ENCODE measurements at regions of chr20 and their contacts with region 1.

Region 1: GRCh38 chr20:1118336-1119127 is at the start of gene PSMF1:
- DNase-seq: peak; percentile 91 to 98 (median 96)
- ATAC-seq: peak; percentile 89
- H3K4me3 ChIP-seq: peak within 1 kb of the TSS; percentile 81
- H3K4me3 Mint-ChIP-seq: peak within 1 kb of the TSS; percentile 96
- H3K27ac ChIP-seq: peak within 1 kb of the TSS; percentile 72 to 74
- H3K27ac Mint-ChIP-seq: peak within 1 kb of the TSS; percentile 96
- H3K4me1 ChIP-seq: peaks cover 55% of the 10 kb centered on the region
- H3K4me1 Mint-ChIP-seq: peaks cover 67% of the 10 kb centered on the region
- H3K27me3 ChIP-seq: no peaks in the 10 kb centered on the region
- H3K27me3 Mint-ChIP-seq: no peaks in the 10 kb centered on the region
- CTCF ChIP-seq: no peak
- total RNA-seq, gene PSMF1: 79.9 to 84.2 TPM

Region 2: GRCh38 chr20:462199-462991 is 656.1 kb before region 1 on chr20 and contains the start of gene TBC1D20:
- CTCF ChIA-PET with region 1: no interaction called
- POLR2A ChIA-PET with region 1: no interaction called
- intact Hi-C with region 1: loop called in 1 of 2 experiments (anchors 5 kb)
- DNase-seq: peak; percentile 72 to 95 (median 85)
- ATAC-seq: peak; percentile 97
- H3K4me3 ChIP-seq: peak within 1 kb of the TSS; percentile 90
- H3K4me3 Mint-ChIP-seq: peak within 1 kb of the TSS; percentile 98
- H3K27ac ChIP-seq: peak within 1 kb of the TSS; percentile 59 to 67
- H3K27ac Mint-ChIP-seq: peak within 1 kb of the TSS; percentile 90
- H3K4me1 ChIP-seq: peaks cover 34% of the 10 kb centered on the region
- H3K4me1 Mint-ChIP-seq: peaks cover 53% of the 10 kb centered on the region
- H3K27me3 ChIP-seq: no peaks in the 10 kb centered on the region
- H3K27me3 Mint-ChIP-seq: no peaks in the 10 kb centered on the region
- CTCF ChIP-seq: peak; percentile 20
- total RNA-seq, gene TBC1D20: 15.7 to 16.1 TPM

Region 3: GRCh38 chr20:833450-834150 is 284.9 kb before region 1 on chr20 and contains the start of gene FAM110A:
- CTCF ChIA-PET with region 1: no interaction called
- POLR2A ChIA-PET with region 1: no interaction called
- intact Hi-C with region 1: loop called (anchors 5 kb)
- DNase-seq: peak; percentile 91 to 98 (median 94)
- ATAC-seq: peak; percentile 93
- H3K4me3 ChIP-seq: peak within 1 kb of the TSS; percentile 74
- H3K4me3 Mint-ChIP-seq: peak within 1 kb of the TSS; percentile 92
- H3K27ac ChIP-seq: peak within 1 kb of the TSS; percentile 83 to 93
- H3K27ac Mint-ChIP-seq: peak within 1 kb of the TSS; percentile 87
- H3K4me1 ChIP-seq: peaks cover 40% of the 10 kb centered on the region
- H3K4me1 Mint-ChIP-seq: peaks cover 50% of the 10 kb centered on the region
- H3K27me3 ChIP-seq: no peaks in the 10 kb centered on the region
- H3K27me3 Mint-ChIP-seq: no peaks in the 10 kb centered on the region
- CTCF ChIP-seq: no peak
- total RNA-seq, gene FAM110A: 4.5 to 4.8 TPM

Region 4: GRCh38 chr20:1041845-1042390 is 76.6 kb before region 1 on chr20:
- CTCF ChIA-PET with region 1: no interaction called
- POLR2A ChIA-PET with region 1: no interaction called
- intact Hi-C with region 1: no loop called
- DNase-seq: no peak
- ATAC-seq: no peak
- H3K4me3 ChIP-seq: no peak overlapping the region
- H3K4me3 Mint-ChIP-seq: no peak overlapping the region
- H3K27ac ChIP-seq: no peak overlapping the region
- H3K27ac Mint-ChIP-seq: no peak overlapping the region
- H3K4me1 ChIP-seq: no peaks in the 10 kb centered on the region
- H3K4me1 Mint-ChIP-seq: no peaks in the 10 kb centered on the region
- H3K27me3 ChIP-seq: no peaks in the 10 kb centered on the region
- H3K27me3 Mint-ChIP-seq: peaks cover 9% of the 10 kb centered on the region
- CTCF ChIP-seq: no peak

Region 5: GRCh38 chr20:1266167-1266973 is 147.8 kb after region 1 on chr20 and contains the start of gene SNPH:
- CTCF ChIA-PET with region 1: no interaction called
- POLR2A ChIA-PET with region 1: no interaction called
- intact Hi-C with region 1: loop called in 1 of 2 experiments (anchors 5 kb)
- DNase-seq: peak; percentile 61 to 90 (median 72)
- ATAC-seq: peak; percentile 80
- H3K4me3 ChIP-seq: peak within 1 kb of the TSS; percentile 60
- H3K4me3 Mint-ChIP-seq: peak within 1 kb of the TSS; percentile 90
- H3K27ac ChIP-seq: peak within 1 kb of the TSS; percentile 50 to 72
- H3K27ac Mint-ChIP-seq: peak within 1 kb of the TSS; percentile 90
- H3K4me1 ChIP-seq: peaks cover 35% of the 10 kb centered on the region
- H3K4me1 Mint-ChIP-seq: peaks cover 77% of the 10 kb centered on the region
- H3K27me3 ChIP-seq: no peaks in the 10 kb centered on the region
- H3K27me3 Mint-ChIP-seq: no peaks in the 10 kb centered on the region
- CTCF ChIP-seq: no peak
- total RNA-seq, gene SNPH: 12.8 to 13.0 TPM

Region 6: GRCh38 chr20:1392823-1393506 is 274.4 kb after region 1 on chr20 and contains the start of gene FKBP1A:
- CTCF ChIA-PET with region 1: no interaction called
- POLR2A ChIA-PET with region 1: no interaction called
- intact Hi-C with region 1: loop called in 1 of 2 experiments (anchors 2 kb)
- DNase-seq: peak; percentile 84 to 97 (median 92)
- ATAC-seq: peak; percentile 83
- H3K4me3 ChIP-seq: peak within 1 kb of the TSS; percentile 85
- H3K4me3 Mint-ChIP-seq: peak within 1 kb of the TSS; percentile 98
- H3K27ac ChIP-seq: peak within 1 kb of the TSS; percentile 37 to 72
- H3K27ac Mint-ChIP-seq: peak within 1 kb of the TSS; percentile 89
- H3K4me1 ChIP-seq: peaks cover 60% of the 10 kb centered on the region
- H3K4me1 Mint-ChIP-seq: peaks cover 61% of the 10 kb centered on the region
- H3K27me3 ChIP-seq: no peaks in the 10 kb centered on the region
- H3K27me3 Mint-ChIP-seq: no peaks in the 10 kb centered on the region
- CTCF ChIP-seq: no peak
- total RNA-seq, gene FKBP1A: 43.3 to 45.4 TPM

Region 7: GRCh38 chr20:2470423-2471193 is 1352.1 kb after region 1 on chr20 and contains the start of gene SNRPB:
- CTCF ChIA-PET with region 1: no interaction called
- POLR2A ChIA-PET with region 1: no interaction called
- intact Hi-C with region 1: loop called (anchors 5 kb)
- DNase-seq: peak; percentile 94 to 99 (median 95)
- ATAC-seq: peak; percentile 93
- H3K4me3 ChIP-seq: peak within 1 kb of the TSS; percentile 90
- H3K4me3 Mint-ChIP-seq: peak within 1 kb of the TSS; percentile 98
- H3K27ac ChIP-seq: peak within 1 kb of the TSS; percentile 91 to 96
- H3K27ac Mint-ChIP-seq: peak within 1 kb of the TSS; percentile 98
- H3K4me1 ChIP-seq: peaks cover 23% of the 10 kb centered on the region
- H3K4me1 Mint-ChIP-seq: peaks cover 54% of the 10 kb centered on the region
- H3K27me3 ChIP-seq: no peaks in the 10 kb centered on the region
- H3K27me3 Mint-ChIP-seq: no peaks in the 10 kb centered on the region
- CTCF ChIP-seq: no peak
- total RNA-seq, gene SNRPB: 146 to 147 TPM